ENCODE measurements at regions of chr3 and their contacts with region 1.

Region 1: GRCh38 chr3:176939022-176939817 is 258.1 kb downstream of the TBL1XR1 start:
- DNase-seq: no peak
- ATAC-seq: peak; percentile 90

Region 2: GRCh38 chr3:176514297-176514696 is 424.9 kb before region 1 on chr3:
- intact Hi-C with region 1: loop called (anchors 10 kb)
- DNase-seq: no peak
- ATAC-seq: peak; percentile 56

Region 3: GRCh38 chr3:176690083-176690869 is 248.9 kb before region 1 on chr3:
- intact Hi-C with region 1: no loop called
- DNase-seq: no peak
- ATAC-seq: no peak

Region 4: GRCh38 chr3:176872771-176873209 is 66.4 kb before region 1 on chr3:
- intact Hi-C with region 1: loop called (anchors 5 kb)
- DNase-seq: no peak
- ATAC-seq: peak; percentile 84

Region 5: DNA sequence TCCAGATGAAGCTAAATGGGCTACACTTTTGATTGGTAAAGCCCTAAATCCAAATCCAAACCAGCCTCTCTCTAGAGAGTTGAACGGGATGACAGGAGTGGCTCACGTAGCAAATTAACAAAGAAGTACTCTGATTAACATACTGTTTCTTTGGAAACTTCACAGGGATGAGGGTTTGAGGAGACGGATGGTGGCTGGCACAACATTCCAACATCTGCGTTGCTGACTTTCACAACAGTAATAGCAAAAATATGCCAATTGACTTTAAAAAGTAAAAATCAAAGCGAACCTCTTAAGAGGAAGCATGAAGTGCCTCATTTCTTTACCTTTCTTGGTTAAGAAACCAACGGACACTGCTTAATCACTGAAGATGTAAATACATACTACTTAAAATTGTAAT is 76.7 kb after region 1 on chr3:
- intact Hi-C with region 1: no loop called
- DNase-seq: no peak
- ATAC-seq: no peak